Activated CD8-positive, alpha-beta T cell treated with anti-CD3 and anti-CD28 coated beads for 36 hours (primary cell): ENCODE measurements at regions of chr12 and their contacts with region 1.

Region 1: GRCh38 chr12:47767216-47767724 is 5.8 kb upstream of the SLC48A1 start:
- DNase-seq: peak; percentile 77
- ATAC-seq: peak; percentile 80
- H3K4me3 Mint-ChIP-seq: no peak overlapping the region
- H3K27ac Mint-ChIP-seq: no peak overlapping the region
- H3K4me1 Mint-ChIP-seq: peaks cover 13% of the 10 kb centered on the region
- H3K27me3 Mint-ChIP-seq: no peaks in the 10 kb centered on the region
- CTCF ChIP-seq: peak; percentile 89

Region 2: DNA sequence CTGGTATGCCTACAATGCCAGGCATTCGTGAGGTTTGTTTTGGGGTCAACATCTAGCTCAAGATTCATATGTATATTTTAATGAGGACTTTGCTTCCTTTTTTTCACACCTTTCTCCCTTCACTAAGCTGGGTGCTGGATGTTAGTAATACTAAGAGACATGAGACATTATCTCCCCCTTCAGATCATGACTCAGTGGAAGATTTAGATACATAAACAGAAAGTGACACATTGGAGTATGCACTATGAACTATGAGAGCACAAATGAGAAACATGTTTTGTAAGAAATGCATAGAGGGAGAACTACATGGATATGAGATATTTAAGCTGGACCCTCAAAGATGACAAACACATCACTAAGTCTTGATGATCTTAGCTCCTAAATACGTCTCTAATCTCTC is 347.8 kb before region 1 on chr12:
- CTCF ChIA-PET with region 1: no interaction called
- POLR2A ChIA-PET with region 1: no interaction called
- intact Hi-C with region 1: no loop called
- DNase-seq: no peak
- ATAC-seq: peak; percentile 88
- H3K4me3 Mint-ChIP-seq: no peak overlapping the region
- H3K27ac Mint-ChIP-seq: peak overlapping the region; percentile 55
- H3K4me1 Mint-ChIP-seq: peaks cover 42% of the 10 kb centered on the region
- H3K27me3 Mint-ChIP-seq: no peaks in the 10 kb centered on the region
- CTCF ChIP-seq: no peak

Region 3: DNA sequence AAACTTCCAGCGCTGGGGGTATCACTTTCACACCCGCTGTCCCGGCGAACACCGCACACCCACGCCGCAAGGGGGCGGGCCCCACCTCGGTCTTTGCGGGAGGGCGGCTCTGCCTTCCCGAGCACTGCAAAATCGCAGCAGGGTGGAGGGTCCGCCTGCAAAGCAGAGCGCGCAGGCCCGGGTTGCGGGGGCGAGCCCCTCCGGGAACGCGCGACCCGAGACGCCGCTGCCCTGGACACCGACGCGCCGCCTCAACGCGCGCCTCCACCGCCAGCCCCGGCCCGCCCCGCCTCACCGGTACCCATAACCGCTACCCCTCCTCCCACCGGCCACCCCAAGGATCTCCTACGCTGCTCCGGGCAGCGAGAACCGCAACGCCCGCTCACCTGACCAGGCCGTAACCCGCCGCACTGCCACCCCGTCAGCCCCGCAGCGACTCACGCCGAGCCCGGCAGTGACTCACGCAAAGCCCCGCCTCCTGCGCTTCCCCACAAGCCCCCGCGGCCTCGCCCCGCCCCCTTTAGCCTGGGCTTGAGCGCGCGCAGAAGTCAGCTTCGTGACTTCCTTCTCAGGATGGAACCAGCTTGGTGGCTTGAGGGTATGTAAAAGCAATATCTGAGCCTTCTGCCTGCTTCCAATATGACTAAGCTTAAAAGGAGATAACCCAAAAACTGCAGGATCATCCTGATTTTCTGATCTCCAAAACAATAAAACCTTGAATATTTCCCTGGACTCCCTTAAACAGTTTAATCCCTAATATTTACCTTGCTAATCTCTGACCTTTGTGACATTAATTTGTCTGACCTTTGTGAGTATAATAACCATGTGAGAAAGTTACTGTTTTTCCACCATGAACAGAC is 61.5 kb before region 1 on chr12 and contains the start of gene RPAP3:
- CTCF ChIA-PET with region 1: interaction called, 116 read pairs
- POLR2A ChIA-PET with region 1: no interaction called
- intact Hi-C with region 1: loop called (anchors 5 kb)
- DNase-seq: peak; percentile 99
- ATAC-seq: peak; percentile 97
- H3K4me3 Mint-ChIP-seq: peak within 1 kb of the TSS; percentile 87
- H3K27ac Mint-ChIP-seq: peak within 1 kb of the TSS; percentile 97
- H3K4me1 Mint-ChIP-seq: peaks cover 47% of the 10 kb centered on the region
- H3K27me3 Mint-ChIP-seq: no peaks in the 10 kb centered on the region
- CTCF ChIP-seq: peak; percentile 67
- total RNA-seq, gene RPAP3: 42.0 to 42.5 TPM

Region 4: DNA sequence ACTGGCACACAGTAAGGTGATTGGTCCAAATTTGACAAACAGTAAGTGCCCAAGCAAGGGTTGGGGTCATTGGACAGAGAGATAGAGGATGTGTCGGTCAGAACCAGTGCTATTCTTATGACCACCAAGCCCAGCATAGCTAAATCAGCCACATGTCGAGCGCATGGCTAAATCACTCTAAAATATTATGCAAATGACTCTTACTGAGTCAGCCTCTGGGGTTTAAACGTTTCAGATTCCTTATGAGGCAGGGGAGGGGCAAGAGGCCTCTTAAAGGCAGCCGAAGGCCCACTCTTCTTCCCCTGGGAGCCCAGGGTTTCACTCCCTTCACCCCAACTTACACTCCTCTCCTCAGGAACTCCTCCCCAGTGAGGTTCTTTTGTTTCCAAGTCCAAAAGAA is 41.4 kb before region 1 on chr12:
- CTCF ChIA-PET with region 1: interaction called, 49 read pairs
- POLR2A ChIA-PET with region 1: no interaction called
- intact Hi-C with region 1: no loop called
- DNase-seq: no peak
- ATAC-seq: no peak
- H3K4me3 Mint-ChIP-seq: no peak overlapping the region
- H3K27ac Mint-ChIP-seq: no peak overlapping the region
- H3K4me1 Mint-ChIP-seq: peaks cover 19% of the 10 kb centered on the region
- H3K27me3 Mint-ChIP-seq: no peaks in the 10 kb centered on the region
- CTCF ChIP-seq: no peak

Region 5: GRCh38 chr12:47779301-47779942 is 12.2 kb after region 1 on chr12:
- CTCF ChIA-PET with region 1: interaction called, 39 read pairs
- POLR2A ChIA-PET with region 1: interaction called, 8 read pairs
- intact Hi-C with region 1: no loop called
- DNase-seq: peak; percentile 96
- ATAC-seq: peak; percentile 80
- H3K4me3 Mint-ChIP-seq: peak overlapping the region; percentile 7
- H3K27ac Mint-ChIP-seq: peak overlapping the region; percentile 18
- H3K4me1 Mint-ChIP-seq: peaks cover 31% of the 10 kb centered on the region
- H3K27me3 Mint-ChIP-seq: no peaks in the 10 kb centered on the region
- CTCF ChIP-seq: peak; percentile 89